Activated CD8-positive, alpha-beta T cell treated with anti-CD3 and anti-CD28 coated beads, Interleukin-2, amount 10 ng/mL, durations not matched to agents 7 days and 5 days (primary cell): ENCODE measurements at regions of chr22 and their contacts with region 1.

Region 1: DNA sequence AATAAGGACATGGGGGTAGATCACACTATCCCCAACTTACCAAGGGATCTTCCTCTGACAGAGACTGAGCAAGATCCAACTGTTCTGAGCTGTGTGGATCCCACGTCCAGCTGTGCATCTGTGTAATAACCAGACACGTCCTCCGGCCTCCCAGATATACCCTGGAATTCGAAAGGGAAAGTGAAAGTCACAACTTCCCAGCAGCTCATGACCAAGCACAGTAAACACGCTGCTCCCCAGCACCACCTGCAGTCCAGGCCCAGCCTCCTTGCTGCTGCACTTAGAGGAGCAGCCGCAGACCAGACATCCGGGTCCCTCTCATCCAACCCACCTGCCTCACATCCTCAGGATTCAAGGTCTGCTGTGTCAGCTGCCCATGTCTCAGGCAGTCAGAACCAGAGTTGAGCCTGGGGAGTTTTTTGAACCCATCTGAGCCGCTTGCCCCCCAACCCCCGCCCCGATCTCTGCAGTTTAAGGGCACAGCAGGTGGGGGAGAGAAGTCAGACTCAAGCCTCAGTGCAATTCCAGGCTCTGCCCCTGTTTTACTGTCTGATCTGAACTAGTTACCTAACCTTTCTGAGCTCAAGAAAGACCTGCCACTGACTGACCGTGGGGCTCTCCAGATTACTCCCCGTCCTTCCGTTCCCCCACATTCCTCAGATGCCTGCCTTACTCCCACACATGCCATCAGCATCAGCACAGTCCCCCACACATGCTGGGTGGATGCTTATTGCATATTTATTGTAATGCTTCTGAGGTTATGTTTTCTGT is at the start of gene APOL2:
- DNase-seq: peak; percentile 92
- ATAC-seq: peak; percentile 98
- H3K4me3 Mint-ChIP-seq: peak within 1 kb of the TSS; percentile 89
- H3K27ac Mint-ChIP-seq: peak within 1 kb of the TSS; percentile 92
- H3K4me1 Mint-ChIP-seq: peaks cover 41% of the 10 kb centered on the region
- H3K27me3 Mint-ChIP-seq: peaks cover 2% of the 10 kb centered on the region
- total RNA-seq, gene APOL2: 62.4 TPM

Region 2: DNA sequence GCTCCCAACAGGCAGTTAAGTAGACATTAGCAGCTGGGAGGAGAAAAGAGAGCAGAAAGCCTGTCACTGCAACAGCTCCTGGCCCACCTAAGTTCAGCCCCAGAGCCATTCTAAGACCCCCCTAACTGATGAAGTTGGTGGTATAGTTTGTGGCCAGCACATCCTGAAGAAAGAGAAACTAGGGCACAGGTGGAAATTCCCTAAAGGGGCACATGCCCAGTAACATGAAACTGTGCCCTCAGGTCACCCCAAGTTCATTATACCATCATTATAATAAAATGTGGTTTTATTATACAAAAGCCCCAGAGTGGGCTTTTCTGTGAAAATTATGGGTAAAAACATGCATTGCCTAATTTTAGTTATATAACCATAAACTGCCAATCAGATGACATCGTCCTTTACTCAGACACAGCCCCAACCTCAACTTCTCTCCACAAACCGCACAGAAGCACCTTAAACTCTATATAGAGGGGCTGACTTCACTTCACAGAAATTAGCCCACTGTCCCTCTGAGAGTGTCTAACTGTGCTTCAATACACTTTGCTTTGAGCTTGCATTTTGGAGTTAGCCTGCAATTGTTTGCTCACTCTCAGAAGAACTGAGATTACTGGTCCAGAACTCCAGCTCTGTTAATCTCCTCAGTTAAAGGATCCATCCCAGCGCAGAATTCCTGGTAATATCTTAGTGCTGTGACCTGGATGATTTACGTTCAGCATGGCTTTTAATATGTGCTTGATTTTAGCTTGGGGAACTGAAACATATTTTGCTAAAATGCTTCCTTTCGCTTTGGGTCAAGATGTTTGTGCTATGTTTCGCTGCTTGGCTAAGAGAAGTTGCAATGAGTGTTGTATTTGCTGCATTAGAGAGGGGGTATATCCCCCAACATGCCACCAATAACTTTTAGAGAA is 77.2 kb before region 1 on chr22:
- CTCF ChIA-PET with region 1: interaction called, 13 read pairs
- POLR2A ChIA-PET with region 1: interaction called, 5 read pairs
- DNase-seq: peak; percentile 79
- ATAC-seq: peak; percentile 50
- H3K4me3 Mint-ChIP-seq: peak overlapping the region; percentile 97
- H3K27ac Mint-ChIP-seq: peak overlapping the region; percentile 89
- H3K4me1 Mint-ChIP-seq: peaks cover 98% of the 10 kb centered on the region
- H3K27me3 Mint-ChIP-seq: no peaks in the 10 kb centered on the region

Region 3: DNA sequence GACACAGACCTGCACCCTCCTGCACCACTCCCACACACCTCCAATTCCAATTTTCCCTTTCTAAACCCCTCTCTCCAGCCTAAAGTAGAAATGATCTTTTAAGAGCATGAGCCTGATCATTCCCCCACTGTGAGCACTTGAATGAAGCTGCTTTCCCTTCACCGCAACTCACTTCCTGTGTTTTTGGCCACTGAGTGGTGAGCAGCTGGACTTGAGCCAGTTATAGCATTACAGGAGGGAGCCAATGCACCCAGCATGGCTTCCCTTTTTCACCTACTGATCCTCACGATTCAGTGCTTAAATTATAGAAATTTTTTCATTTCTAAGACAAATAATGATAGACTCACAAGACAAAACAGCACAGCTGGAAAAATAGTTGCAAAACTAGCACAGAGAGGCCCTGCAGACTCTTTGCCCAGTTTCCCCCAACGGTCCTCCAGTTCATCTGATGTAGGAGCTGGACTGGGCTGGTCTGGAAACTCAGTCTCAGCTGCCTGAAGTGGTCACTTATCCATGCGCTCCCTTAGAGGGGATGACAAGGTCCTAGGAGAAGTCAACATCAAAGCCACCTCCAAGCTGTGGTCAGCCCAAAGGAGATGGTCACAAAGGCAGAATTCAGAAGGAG is 28.2 kb before region 1 on chr22:
- CTCF ChIA-PET with region 1: interaction called, 12 read pairs
- POLR2A ChIA-PET with region 1: no interaction called
- DNase-seq: peak; percentile 32
- ATAC-seq: no peak
- H3K4me3 Mint-ChIP-seq: peak overlapping the region; percentile 2
- H3K27ac Mint-ChIP-seq: no peak overlapping the region
- H3K4me1 Mint-ChIP-seq: peaks cover 26% of the 10 kb centered on the region
- H3K27me3 Mint-ChIP-seq: peaks cover 45% of the 10 kb centered on the region

Region 4: DNA sequence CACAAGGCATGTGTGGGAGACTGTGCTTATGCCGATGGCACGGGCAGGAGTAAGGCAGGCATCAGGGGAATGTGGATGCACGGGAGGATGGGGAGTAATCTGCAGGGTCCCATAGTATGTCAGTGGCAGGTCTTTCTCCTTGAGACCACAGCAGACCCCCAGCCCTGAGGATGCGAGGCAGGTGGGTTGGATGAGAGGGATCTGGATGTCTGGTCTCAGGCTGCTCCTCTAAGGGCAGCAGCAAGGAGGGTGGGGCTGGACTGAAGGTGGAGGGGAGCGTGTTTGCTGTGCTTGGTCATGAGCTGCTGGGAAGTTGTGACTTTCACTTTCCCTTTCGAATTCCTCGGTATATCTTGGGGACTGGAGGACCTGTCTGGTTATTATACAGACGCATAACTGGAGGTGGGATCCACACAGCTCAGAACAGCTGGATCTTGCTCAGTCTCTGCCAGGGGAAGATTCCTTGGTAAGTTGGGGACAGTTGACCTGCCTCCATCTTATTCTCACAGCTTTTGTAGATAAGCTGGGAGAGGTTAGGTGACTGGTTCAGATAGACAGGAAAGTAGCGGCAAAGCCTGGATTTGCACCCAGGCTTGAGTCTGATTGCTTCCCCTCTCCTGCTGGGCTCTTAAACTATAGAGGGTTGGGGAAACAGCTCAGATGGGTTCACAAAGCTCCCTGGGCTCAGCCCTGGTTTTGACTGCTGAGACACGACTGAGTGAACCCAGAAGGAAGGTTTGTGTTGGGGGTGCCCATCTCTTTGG is 13.3 kb after region 1 on chr22 and contains the start of gene APOL1:
- CTCF ChIA-PET with region 1: interaction called, 90 read pairs
- POLR2A ChIA-PET with region 1: interaction called, 6 read pairs
- DNase-seq: peak; percentile 76
- ATAC-seq: peak; percentile 96
- H3K4me3 Mint-ChIP-seq: peak within 1 kb of the TSS; percentile 95
- H3K27ac Mint-ChIP-seq: peak within 1 kb of the TSS; percentile 92
- H3K4me1 Mint-ChIP-seq: peaks cover 59% of the 10 kb centered on the region
- H3K27me3 Mint-ChIP-seq: no peaks in the 10 kb centered on the region
- total RNA-seq, gene APOL1: 37.4 to 38.2 TPM

Region 5: GRCh38 chr22:36277482-36278291 is 38.1 kb after region 1 on chr22:
- CTCF ChIA-PET with region 1: interaction called, 23 read pairs
- POLR2A ChIA-PET with region 1: interaction called, 4 read pairs
- DNase-seq: peak; percentile 82
- ATAC-seq: peak; percentile 76
- H3K4me3 Mint-ChIP-seq: no peak overlapping the region
- H3K27ac Mint-ChIP-seq: peak overlapping the region; percentile 66
- H3K4me1 Mint-ChIP-seq: peaks cover 30% of the 10 kb centered on the region
- H3K27me3 Mint-ChIP-seq: no peaks in the 10 kb centered on the region

Region 6: GRCh38 chr22:36387752-36388518 is 148.3 kb after region 1 on chr22 and contains the start of gene MYH9:
- CTCF ChIA-PET with region 1: no interaction called
- POLR2A ChIA-PET with region 1: no interaction called
- DNase-seq: peak; percentile 100
- ATAC-seq: peak; percentile 85
- H3K4me3 Mint-ChIP-seq: peak within 1 kb of the TSS; percentile 88
- H3K27ac Mint-ChIP-seq: peak within 1 kb of the TSS; percentile 92
- H3K4me1 Mint-ChIP-seq: peaks cover 45% of the 10 kb centered on the region
- H3K27me3 Mint-ChIP-seq: no peaks in the 10 kb centered on the region
- total RNA-seq, gene MYH9: 857 to 883 TPM